Mucosa of descending colon (tissue), 3 donors: ENCODE measurements at regions of chr17 and their contacts with region 1.

Region 1: DNA sequence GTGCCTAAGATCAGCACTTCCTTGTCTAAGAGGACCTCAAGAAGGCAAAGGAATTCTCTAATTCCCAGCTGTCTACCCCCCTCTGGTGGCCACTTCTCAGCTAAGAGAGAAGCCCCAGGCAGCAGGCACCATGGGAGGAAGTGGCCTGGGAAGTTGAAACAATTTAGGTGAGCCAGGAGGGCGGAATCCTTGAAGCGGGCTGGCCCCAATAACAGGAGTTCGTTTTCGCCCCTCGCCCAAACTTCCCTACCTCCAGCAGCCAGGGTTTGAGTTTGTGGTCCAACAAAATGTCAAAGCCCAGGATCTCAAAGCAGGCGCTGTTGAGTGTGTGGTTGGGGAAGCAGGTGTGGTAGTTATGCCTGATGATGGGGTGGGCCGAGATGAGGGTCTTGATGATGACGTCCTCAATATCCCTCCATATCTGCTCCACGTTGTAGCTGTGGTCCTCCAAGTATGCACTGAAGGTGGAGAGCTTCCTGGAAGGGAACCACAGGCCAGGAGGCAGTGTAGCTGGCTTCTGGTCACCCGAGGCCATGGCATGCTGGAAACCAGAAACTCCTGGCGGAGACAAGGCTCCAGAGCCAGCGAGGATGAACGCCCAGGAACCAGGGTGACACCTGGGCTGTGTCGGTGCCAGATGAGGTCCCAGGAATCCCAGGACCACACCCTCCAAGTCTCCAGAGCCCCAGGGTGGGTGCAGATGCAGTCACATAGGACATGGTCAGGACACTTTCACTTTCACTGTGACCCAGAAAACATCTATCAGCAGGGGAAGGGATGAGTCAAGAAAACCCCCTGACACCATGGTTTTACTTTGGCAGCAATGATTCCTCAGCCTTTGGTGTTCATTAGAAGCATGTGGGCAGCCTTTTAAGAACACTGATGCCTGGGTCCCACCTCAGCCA is 25.6 kb downstream of the TTLL6 start:
- DNase-seq: peak; percentile 72 to 99 (median 82)
- ATAC-seq: peak; percentile 85
- H3K4me3 ChIP-seq: no peak overlapping the region
- H3K4me1 ChIP-seq: peaks cover 25% of the 10 kb centered on the region
- CTCF ChIP-seq: peak; percentile 60

Region 2: DNA sequence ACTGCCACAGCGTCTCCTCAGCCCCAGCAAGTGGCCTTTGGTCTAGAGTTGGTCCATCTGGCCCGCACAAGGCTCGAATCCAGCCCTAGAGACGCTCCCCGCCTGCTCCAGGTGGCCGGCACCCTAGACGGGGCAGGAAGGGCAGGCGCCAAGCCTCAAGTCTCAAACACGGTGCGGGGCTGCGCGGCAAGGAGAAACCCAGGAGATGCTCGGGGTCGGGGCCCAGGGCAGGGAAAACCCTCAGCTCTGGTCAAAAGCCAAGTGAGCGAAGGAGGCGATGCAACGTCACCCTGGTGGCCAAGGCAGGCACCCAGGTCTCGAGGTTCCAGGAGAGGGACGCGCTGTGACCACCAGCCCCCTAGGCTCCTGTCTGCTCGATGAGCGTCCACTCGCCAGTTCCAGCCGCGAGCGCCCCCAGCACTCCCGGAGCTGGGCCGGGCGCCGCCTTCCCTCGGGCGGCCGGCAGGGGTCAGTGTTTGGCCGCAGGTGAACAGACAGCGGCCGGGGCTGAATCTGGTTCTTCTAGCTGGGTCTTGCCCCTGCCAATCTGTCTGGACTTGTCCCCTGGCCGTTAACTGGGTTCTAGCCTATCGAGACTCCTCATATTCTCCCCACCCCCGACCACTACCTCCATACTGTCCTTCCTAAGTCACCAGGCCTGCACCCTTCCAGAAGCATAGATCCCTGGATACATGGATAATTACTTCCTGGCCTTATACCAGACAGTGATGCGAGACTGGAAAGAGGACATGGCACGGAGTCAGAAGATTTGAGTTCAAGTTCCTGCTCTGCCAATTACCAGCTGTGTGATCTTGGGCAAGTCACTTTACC is 113.0 kb before region 1 on chr17:
- intact Hi-C with region 1: loop called in 1 of 2 experiments (anchors 5 kb)
- DNase-seq: peak; percentile 74 to 86 (median 85)
- ATAC-seq: peak; percentile 96
- H3K4me3 ChIP-seq: no peak overlapping the region
- H3K4me1 ChIP-seq: peaks cover 11% of the 10 kb centered on the region
- CTCF ChIP-seq: peak; percentile 95

Region 3: DNA sequence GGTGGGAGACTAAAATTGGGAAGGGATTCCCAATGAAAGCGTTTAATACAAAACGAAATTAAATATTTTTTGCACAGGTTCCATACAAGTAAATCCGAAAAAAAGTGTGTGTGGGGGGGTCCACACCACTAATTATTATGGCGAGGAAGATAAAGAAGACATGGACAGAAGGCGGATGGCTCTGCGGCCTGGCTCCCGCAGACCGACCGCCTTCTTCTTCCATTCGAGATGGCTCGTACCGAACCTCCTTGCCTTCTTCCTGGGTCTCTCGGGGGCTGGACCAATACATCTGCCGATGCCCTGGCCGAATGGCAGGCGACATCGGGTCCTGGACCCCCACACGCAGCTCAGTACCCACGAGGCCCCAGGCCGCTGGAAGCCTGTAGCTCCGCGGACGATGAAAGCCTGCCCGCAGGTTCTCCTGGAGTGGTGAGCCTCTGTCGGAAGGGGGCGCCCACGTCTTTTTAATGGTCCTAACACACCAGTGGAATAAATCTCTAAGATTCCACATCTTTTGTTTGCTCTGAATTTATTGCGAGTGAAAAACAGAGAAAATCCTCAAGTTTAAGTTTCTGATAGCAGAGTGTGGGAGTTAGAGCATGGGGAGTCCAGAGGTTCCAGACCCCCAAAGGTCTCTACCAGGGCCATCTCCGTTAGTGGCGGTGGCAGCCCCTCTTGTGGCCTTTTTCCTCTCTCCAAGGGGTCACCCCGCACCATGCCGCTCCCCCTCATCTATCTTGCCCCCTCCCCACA is 67.0 kb before region 1 on chr17:
- intact Hi-C with region 1: loop called (anchors 5 kb)
- DNase-seq: peak; percentile 91 to 98 (median 95)
- ATAC-seq: peak; percentile 40
- H3K4me3 ChIP-seq: no peak overlapping the region
- H3K4me1 ChIP-seq: peaks cover 20% of the 10 kb centered on the region
- CTCF ChIP-seq: peak; percentile 57

Region 4: DNA sequence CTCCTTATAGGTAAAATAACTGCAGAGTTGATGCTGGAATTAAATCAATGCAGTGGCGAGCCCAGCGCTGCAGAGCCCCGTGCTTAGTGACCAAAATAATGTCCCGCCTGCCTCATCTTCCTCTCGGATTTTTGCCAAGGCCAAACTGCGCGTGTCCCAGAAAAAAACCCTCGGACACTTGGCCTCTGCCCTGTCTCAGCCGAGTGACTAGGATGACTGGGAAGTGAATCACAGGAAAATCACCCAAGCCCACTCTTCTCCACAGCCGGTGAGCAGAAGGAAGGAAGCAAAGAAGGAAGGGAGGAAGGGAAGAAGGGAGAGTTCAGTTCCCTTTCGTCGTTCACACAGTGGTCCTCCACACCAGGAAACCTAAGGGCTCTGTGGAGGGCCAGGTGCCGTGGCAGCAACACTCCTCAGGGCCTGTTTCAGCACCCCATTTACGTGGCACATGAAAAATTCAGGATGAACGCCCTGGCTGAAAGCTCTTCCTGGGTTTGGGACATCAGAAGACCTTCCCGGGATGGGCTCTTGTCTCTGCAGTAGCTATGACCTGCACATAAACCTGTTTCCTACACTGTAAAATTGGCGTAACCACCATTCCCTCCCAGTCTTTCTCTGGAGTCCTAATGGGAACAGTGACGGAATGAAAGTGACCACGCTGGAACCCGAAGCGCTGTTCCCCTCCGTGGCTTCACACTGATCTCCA is 37.4 kb before region 1 on chr17:
- intact Hi-C with region 1: no loop called
- DNase-seq: no peak
- ATAC-seq: no peak
- H3K4me3 ChIP-seq: no peak overlapping the region
- H3K4me1 ChIP-seq: peaks cover 4% of the 10 kb centered on the region
- CTCF ChIP-seq: no peak

Region 5: DNA sequence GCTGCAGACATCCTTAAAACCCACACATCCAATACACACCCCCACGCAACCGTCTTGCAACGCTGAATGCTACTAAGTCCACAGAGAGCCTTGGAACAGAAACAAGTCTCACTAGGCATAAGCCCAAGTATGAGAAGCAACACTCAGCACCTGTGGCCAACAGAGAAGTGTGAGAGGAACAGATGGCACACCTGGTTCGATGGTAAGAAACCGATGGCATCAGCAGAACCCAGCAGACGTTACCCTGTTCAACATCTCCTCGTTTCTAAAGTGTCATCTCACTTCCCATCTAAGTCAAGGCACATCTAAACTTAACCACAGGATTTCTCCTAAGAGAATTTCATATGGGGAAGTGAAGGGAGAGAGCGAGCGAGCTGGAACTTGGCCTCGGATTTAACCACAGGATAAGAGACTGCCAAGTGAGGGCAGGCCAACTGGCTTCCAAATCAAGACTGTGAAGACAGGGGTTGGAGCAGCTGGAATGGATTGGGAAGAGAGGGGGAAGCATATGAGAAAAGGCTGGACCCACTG is 825.3 kb after region 1 on chr17:
- intact Hi-C with region 1: no loop called
- DNase-seq: peak in 2 of 3 donors; percentile 20 to 57
- ATAC-seq: peak; percentile 49
- H3K4me3 ChIP-seq: no peak overlapping the region
- H3K4me1 ChIP-seq: no peaks in the 10 kb centered on the region
- CTCF ChIP-seq: no peak